ENCODE measurements at regions of chr3 and their contacts with region 1.

Region 1: DNA sequence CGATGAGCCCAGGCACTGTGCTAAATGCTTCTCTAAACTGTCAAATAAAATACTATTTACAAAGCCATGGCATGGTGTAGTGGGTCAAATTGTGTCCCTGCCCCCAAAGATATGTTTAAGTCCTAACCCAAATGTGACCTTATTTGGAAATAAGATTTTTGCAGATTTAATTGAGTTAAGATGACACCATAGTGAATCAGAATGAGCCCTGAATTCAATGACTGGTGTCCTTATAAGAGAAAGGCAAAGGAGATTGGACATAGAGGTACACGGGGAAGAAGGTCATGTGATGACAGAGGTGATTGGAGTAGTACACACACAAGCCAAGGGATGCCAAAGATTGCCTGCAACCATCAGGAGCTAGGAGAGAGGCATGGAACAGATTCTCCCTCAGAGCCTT is 121.6 kb upstream of the VEPH1 start:
- DNase-seq: no peak
- ATAC-seq: no peak
- H3K4me3 ChIP-seq: no peak overlapping the region
- H3K27ac ChIP-seq: no peak overlapping the region
- H3K4me1 ChIP-seq: no peaks in the 10 kb centered on the region
- H3K27me3 ChIP-seq: peaks cover 0 to 13% (median 0%) of the 10 kb centered on the region in 9 donors
- CTCF ChIP-seq: no peak
- POLR2A ChIP-seq: no peak

Region 2: DNA sequence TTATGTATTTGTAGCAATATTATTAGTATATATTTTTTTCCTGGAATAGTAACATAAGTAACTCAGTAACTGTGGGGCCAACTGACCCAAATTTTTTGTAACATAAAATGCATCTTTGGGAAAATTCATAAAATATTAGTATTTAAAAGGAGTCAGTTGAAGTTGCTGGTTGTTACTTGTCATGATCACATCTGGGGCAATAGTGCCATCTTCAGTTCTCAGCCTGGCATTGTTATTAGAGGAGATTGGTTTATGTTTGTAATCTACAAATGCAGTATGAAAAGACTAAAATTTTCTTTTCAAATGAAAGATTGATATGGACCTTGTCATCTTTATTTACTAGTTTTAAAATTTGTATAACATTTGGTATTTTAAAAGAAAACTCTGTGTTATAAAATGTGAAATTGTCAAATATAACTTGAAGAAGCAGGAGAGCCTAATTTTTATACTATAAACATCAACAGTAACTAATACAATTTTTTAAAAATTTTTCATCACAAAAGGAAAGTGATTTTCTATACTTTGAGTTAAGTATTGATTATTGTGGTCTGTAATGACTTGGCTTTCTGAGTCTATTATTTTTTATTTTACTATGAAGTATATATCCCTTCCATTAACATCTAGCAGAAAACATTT is 907.4 kb after region 1 on chr3:
- intact Hi-C with region 1: loop called in 1 of 10 experiments (anchors 5 kb)
- DNase-seq: peak in 1 of 5 donors; percentile 10
- ATAC-seq: peak in 1 of 4 donors; percentile 55
- H3K4me3 ChIP-seq: no peak overlapping the region
- H3K27ac ChIP-seq: no peak overlapping the region
- H3K4me1 ChIP-seq: no peaks in the 10 kb centered on the region
- H3K27me3 ChIP-seq: no peaks in the 10 kb centered on the region
- CTCF ChIP-seq: peak; percentile 25 to 69 (median 56)
- POLR2A ChIP-seq: no peak